ENCODE measurements at regions of chrX and their contacts with region 1.

Region 1: GRCh38 chrX:28854637-28855036 is 267.4 kb downstream of the IL1RAPL1 start:
- DNase-seq: no peak
- ATAC-seq: no peak
- H3K4me3 ChIP-seq: no peak overlapping the region
- H3K27ac ChIP-seq: no peak overlapping the region
- H3K4me1 ChIP-seq: no peaks in the 10 kb centered on the region
- H3K27me3 ChIP-seq: no peaks in the 10 kb centered on the region
- CTCF ChIP-seq: no peak

Region 2: GRCh38 chrX:28802625-28803024 is 52.0 kb before region 1 on chrX:
- intact Hi-C with region 1: no loop called
- DNase-seq: no peak
- ATAC-seq: no peak
- H3K4me3 ChIP-seq: no peak overlapping the region
- H3K27ac ChIP-seq: no peak overlapping the region
- H3K4me1 ChIP-seq: no peaks in the 10 kb centered on the region
- H3K27me3 ChIP-seq: no peaks in the 10 kb centered on the region
- CTCF ChIP-seq: peak in 2 of 9 donors; percentile 11 to 28

Region 3: DNA sequence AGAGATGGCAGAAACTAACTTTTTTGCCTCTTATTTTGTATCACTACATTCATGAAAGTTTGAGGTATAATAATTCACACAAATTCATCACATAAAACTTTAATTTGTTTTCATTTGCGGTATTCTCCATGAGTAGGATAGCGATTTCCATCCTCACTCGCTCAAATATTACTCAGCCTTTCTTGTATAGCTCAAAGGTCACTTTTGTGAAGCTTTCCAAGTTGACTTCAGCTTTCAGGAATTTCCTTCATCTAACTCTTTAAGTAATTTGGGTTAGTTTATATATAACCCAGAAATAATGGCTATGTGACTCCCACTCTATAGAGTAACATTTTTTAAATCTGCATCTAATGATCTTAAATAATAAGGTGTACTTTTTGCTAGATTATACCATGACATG is 47.0 kb after region 1 on chrX:
- intact Hi-C with region 1: loop called in 2 of 10 experiments (anchors 2 to 10 kb)
- DNase-seq: no peak
- ATAC-seq: no peak
- H3K4me3 ChIP-seq: no peak overlapping the region
- H3K27ac ChIP-seq: no peak overlapping the region
- H3K4me1 ChIP-seq: no peaks in the 10 kb centered on the region
- H3K27me3 ChIP-seq: no peaks in the 10 kb centered on the region
- CTCF ChIP-seq: no peak